HAP-1 (cell line): ENCODE measurements at regions of chr4 and their contacts with region 1.

Region 1: DNA sequence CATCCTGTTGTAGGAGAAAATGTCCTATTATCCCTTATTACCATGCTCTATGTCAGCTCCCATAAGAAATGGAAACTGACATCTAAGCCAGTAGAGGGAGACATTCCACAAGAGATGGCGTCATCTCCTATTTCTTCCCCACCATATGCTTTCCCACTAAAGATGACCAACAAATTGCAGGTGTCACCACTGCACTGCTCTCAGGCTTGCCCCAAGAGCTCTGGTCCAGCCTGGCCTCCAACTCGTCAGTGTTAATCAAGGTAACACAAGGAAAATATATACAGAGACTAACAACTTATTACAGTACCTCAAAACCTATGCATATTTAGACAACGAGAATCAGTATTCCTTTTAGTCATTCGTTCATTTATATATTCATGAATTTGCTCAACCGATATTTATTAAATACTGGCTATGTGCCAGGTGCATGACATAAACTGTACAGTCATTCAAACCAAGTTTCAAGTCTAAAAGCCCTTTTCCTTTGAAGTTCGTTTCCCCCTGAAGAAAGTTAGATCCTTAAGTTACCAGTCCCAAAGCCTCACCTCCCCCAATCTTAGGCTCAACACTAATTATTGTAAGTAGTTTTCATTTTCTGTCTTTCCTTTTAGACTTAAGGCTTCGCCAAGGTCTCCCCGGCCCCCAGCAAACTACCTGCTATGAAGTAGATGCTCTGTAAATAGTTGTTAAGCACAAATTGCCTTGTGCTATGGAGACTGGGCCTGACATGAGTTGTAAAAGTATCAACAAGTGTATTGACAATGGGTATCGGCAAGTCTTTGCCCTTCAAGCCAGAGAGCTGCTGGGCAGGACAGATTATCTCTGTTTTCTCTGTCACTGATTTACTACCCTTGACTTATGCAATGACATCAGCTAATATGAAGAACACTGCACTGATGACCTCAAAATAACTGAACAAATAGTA is 3.1 kb upstream of the FGB start:
- DNase-seq: peak; percentile 10 to 49
- H3K4me3 ChIP-seq: no peak overlapping the region
- H3K4me1 ChIP-seq: no peaks in the 10 kb centered on the region
- H3K27me3 ChIP-seq: peaks cover 11% of the 10 kb centered on the region

Region 2: GRCh38 chr4:154618708-154619315 is 59.1 kb after region 1 on chr4:
- in situ Hi-C with region 1: loop called (anchors 5 kb)
- DNase-seq: peak; percentile 47 to 71
- H3K4me3 ChIP-seq: no peak overlapping the region
- H3K4me1 ChIP-seq: no peaks in the 10 kb centered on the region
- H3K27me3 ChIP-seq: peaks cover 6% of the 10 kb centered on the region; the same call in 1 of the 2 replicates

Region 3: DNA sequence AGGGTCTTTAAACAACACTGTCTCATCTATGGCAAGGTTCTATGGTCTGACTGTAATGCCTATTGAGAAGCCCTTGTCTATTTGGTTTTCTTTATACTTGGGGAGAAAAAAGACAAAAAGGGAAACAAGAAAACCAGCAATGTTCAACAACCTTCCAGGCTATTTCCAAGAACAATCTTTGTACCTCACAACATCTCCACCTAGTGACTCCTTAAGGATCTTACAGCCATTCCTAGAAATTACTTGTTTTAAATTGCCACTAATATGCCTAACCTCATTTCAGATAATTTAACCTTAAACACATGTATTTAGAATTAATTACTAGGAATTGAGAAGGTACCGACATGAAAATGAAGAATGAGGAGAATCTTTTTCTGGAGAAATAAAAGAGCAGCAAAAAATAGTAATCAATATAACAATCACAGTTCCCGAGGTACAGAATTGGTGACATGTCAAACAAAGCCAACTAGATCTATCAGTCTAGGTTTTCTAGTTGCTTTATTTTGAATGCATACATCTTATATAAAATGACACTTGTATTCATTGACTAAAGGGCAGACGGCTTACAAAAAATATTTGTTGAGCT is 219.7 kb after region 1 on chr4:
- in situ Hi-C with region 1: no loop called
- DNase-seq: peak in 1 of 2 experiments; percentile 38
- H3K4me3 ChIP-seq: no peak overlapping the region
- H3K4me1 ChIP-seq: no peaks in the 10 kb centered on the region
- H3K27me3 ChIP-seq: 0 out of 2 replicates have a peak, but pooled peaks cover 3% of the 10 kb centered on the region

Region 4: GRCh38 chr4:155304375-155304774 is 744.6 kb after region 1 on chr4:
- in situ Hi-C with region 1: no loop called
- DNase-seq: no peak
- H3K4me3 ChIP-seq: no peak overlapping the region
- H3K4me1 ChIP-seq: no peaks in the 10 kb centered on the region
- H3K27me3 ChIP-seq: no peaks in the 10 kb centered on the region